Esophagus muscularis mucosa (tissue), 4 donors: ENCODE measurements at regions of chr1 and their contacts with region 1.

Region 1: DNA sequence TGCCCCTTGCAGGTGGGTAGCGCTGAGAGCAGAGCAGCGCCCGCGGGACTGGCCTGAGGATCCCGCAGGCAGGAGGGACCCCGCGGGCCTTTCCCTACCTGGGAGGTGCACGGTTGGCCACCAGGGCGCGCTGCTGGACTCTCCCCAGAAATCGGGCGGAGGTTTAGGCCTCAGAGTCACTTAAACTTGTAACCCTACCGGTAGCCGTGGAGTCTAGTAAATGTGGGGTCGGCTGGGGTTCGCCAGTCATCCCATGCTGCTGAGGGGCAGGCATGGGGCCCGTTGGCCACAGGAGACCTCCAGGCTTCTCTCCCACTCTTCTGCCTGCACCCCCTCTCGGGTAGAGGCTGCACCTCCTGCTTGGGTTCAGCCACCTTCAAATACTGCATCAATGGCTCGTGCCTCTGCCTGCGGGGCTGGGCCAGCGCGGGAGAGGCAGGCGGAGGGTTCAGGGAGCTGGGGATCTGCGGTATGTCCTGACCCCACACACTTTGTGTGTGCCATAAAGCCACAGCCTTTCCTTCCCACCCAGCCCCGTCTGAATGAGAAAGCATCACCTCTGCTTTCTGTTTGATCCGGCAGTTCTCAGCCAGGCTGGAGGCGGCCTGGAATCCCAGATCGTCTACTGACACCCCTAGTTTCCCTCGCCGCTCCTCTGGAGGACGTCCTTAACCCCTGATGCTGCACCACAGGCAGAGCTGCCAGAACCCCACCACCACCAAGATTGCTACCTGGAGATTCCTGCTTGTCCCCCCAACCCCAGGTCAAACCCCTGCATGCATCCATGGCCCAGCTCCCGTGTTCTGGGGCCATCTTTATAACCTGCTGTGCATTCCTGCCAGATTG is 12.3 kb upstream of the GSTM4 start:
- DNase-seq: peak; percentile 96
- H3K4me3 ChIP-seq: peak overlapping the region in 2 of 4 donors; percentile 20 to 30
- H3K27ac ChIP-seq: no peak overlapping the region
- H3K4me1 ChIP-seq: peaks cover 8 to 17% (median 10%) of the 10 kb centered on the region in 4 donors
- H3K27me3 ChIP-seq: no peaks in the 10 kb centered on the region
- CTCF ChIP-seq: peak; percentile 87 to 91 (median 87)
- EP300 ChIP-seq: no peak
- POLR2A ChIP-seq: no peak

Region 2: DNA sequence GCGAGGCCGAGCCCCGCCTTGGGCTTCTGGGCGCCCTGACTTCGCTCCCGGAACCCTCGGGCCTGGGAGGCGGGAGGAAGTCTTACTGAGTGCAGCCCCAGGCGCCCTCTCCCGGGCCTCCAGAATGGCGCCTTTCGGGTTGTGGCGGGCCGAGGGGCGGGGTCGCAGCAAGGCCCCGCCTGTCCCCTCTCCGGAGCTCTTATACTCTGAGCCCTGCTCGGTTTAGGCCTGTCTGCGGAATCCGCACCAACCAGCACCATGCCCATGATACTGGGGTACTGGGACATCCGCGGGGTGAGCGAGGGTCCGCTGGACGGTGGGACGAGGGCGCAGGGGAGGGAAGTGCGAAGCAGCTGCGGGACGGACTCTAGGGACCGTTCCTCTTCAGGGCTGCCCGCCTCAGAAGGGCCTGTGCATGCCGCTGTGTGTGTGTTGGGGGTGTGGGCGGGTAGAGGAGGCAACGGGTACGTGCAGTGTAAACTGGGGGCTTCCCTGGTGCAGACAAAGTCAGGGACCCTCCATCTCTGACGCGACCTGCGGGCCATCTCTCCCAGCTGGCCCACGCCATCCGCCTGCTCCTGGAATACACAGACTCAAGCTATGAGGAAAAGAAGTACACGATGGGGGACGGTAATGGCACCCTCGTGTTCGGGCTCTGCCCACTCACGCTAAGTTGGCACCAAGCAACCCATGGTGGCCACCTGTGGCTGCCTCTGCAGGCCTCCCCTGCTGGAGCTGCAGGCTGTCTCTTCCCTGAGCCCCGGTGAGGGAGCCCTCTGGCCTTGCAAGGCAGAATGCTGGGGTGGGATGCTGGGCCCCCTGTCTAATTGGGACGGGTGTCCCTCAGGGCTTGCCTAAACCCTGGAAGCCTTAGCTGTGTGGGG is 44.2 kb after region 1 on chr1 and contains the start of gene GSTM1:
- intact Hi-C with region 1: loop called (anchors 5 kb)
- DNase-seq: no peak
- H3K4me3 ChIP-seq: peak within 1 kb of the TSS in 1 of 4 donors; percentile 64
- H3K27ac ChIP-seq: peak within 1 kb of the TSS in 1 of 4 donors; percentile 71
- H3K4me1 ChIP-seq: no peaks in the 10 kb centered on the region
- H3K27me3 ChIP-seq: no peaks in the 10 kb centered on the region
- CTCF ChIP-seq: no peak
- EP300 ChIP-seq: no peak
- POLR2A ChIP-seq: no peak
- total RNA-seq, gene GSTM1: 23.1 TPM in 1 of 4 donors, not detected in the others

Region 3: GRCh38 chr1:109773146-109773899 is 129.7 kb after region 1 on chr1:
- intact Hi-C with region 1: loop called (anchors 5 kb)
- DNase-seq: peak; percentile 94
- H3K4me3 ChIP-seq: no peak overlapping the region
- H3K27ac ChIP-seq: no peak overlapping the region
- H3K4me1 ChIP-seq: peaks cover 7 to 21% (median 16%) of the 10 kb centered on the region in 4 donors
- H3K27me3 ChIP-seq: no peaks in the 10 kb centered on the region
- CTCF ChIP-seq: peak; percentile 86 to 92 (median 89)
- EP300 ChIP-seq: no peak
- POLR2A ChIP-seq: no peak